CD8-positive, alpha-beta memory T cell (primary cell): ENCODE measurements at regions of chr19 and their contacts with region 1.

Region 1: DNA sequence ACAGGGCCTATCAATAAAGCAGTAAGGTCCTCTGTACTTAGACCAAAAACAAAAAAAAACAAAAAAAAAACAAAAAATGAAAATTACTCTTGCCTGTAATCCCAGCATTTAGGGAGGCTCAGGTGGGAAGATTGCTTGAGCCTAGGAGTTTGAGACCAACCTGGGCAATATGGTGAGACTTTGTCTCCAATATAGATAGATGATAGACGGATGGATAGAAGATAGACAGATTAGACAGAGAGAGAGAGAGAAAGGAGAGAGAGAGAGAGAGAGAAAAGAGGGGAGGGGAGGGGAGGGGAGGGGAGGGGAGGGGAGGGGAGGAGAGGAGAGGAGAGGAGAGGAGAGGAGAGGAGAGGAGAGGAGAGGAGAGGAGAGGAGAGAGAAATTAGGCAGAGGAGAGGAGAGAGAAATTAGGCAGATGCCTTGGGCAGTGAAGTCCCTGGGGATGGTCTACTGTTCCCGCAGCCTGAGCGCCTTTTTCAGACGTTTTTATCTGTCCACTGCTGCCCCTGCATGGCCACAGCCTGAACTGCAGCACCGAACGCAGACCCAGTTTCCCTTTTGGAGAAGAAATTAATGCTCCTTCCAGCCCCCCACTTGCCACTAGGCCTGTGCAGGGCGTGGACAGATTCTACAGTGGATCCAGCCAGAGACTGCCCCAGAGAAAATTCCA is 9.8 kb upstream of the ZNF627 start:
- DNase-seq: peak; percentile 64 to 83 (median 68)
- H3K4me3 ChIP-seq: no peak overlapping the region
- H3K4me3 Mint-ChIP-seq: peak overlapping the region in 1 of 7 donors; percentile 14
- H3K27ac ChIP-seq: no peak overlapping the region
- H3K27ac Mint-ChIP-seq: peak overlapping the region in 4 of 8 donors; percentile 34 to 91 (median 57)
- H3K4me1 ChIP-seq: no peaks in the 10 kb centered on the region
- H3K4me1 Mint-ChIP-seq: peaks cover 2 to 4% (median 4%) of the 10 kb centered on the region in 3 donors
- H3K27me3 ChIP-seq: no peaks in the 10 kb centered on the region
- H3K27me3 Mint-ChIP-seq: no peaks in the 10 kb centered on the region

Region 2: DNA sequence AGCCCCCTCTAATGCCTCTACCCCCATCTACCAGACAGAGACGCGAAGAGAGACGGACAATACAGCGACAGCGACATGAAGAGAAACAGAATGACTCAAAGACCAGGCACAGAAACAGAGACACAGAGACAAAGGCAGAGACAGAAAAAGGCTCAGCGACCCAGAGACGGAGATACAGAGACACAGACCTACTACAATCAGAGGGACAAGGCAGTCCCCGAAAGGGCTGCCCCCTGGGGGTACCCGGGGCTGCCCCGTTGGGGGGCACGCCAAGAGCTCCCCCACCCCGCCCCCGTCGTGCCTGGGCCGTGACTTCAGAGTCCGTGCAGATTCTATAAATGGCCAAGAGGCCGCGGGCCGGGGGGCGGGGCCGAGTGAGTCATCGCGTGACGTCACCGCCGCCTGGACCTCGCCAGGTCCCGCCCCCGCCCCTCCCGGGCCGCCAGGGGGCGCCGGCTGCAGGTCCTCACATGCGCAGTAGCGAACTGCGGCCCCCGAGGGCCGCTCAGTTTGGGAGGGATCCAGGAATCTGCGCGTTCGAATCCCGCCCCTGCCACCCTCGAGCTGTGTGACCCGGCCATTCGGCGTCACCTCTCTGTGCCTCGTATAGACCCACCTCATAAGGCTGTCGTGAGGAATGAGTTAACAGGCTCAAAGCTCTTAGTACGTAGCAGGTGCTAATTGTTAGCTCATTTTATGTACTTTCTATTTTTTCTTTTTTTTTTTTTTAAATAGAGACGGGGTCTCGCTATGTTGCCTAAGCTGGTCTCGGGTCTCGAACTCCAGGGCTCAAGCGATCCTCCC is 51.4 kb before region 1 on chr19:
- CTCF ChIA-PET with region 1: interaction called, 13 read pairs
- POLR2A ChIA-PET with region 1: interaction called, 5 read pairs
- DNase-seq: peak; percentile 73 to 86 (median 83)
- H3K4me3 ChIP-seq: peak overlapping the region; percentile 49
- H3K4me3 Mint-ChIP-seq: peak overlapping the region; percentile 53 to 81 (median 70)
- H3K27ac ChIP-seq: peak overlapping the region; percentile 67
- H3K27ac Mint-ChIP-seq: peak overlapping the region; percentile 66 to 91 (median 81)
- H3K4me1 ChIP-seq: peaks cover 14% of the 10 kb centered on the region
- H3K4me1 Mint-ChIP-seq: peaks cover 10 to 16% (median 14%) of the 10 kb centered on the region in 3 donors
- H3K27me3 ChIP-seq: peaks cover 5% of the 10 kb centered on the region
- H3K27me3 Mint-ChIP-seq: peaks cover 11 to 12% of the 10 kb centered on the region in 2 donors

Region 3: GRCh38 chr19:11612816-11613511 is 25.5 kb after region 1 on chr19:
- CTCF ChIA-PET with region 1: no interaction called
- POLR2A ChIA-PET with region 1: no interaction called
- DNase-seq: no peak
- H3K4me3 ChIP-seq: no peak overlapping the region
- H3K4me3 Mint-ChIP-seq: no peak overlapping the region
- H3K27ac ChIP-seq: no peak overlapping the region
- H3K27ac Mint-ChIP-seq: peak overlapping the region in 2 of 8 donors; percentile 6 to 55
- H3K4me1 ChIP-seq: no peaks in the 10 kb centered on the region
- H3K4me1 Mint-ChIP-seq: peaks cover 5 to 15% (median 7%) of the 10 kb centered on the region in 3 donors
- H3K27me3 ChIP-seq: no peaks in the 10 kb centered on the region
- H3K27me3 Mint-ChIP-seq: no peaks in the 10 kb centered on the region